AG04449 (cell line): ENCODE measurements at regions of chr19 and their contacts with region 1.

Region 1: DNA sequence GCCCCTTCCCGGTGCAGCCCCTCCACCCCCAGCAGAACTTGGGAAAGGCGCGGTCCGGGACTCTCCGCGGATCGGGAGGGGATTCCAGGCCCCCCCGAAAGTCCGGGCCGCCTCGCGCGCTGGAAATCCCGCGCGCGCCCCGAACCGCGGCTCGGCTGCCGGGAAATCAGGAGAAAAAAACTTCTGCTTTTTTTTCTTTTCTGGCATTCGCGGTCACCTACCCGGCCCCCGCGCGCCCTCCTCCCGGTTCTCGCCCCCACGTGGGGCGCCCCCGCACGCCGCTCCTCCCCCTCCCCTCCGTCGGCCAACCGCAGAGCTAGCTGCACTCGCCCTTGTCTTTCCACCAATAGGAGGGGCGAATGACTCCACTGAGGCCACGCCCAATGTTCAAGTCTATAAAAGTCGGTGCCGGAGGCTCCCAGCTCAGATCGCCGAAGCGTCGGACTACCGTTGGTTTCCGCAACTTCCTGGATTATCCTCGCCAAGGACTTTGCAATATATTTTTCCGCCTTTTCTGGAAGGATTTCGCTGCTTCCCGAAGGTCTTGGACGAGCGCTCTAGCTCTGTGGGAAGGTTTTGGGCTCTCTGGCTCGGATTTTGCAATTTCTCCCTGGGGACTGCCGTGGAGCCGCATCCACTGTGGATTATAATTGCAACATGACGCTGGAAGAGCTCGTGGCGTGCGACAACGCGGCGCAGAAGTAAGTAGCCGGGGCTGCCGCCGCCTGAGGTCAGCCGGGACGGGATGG is at the start of gene GADD45B:
- DNase-seq: peak; percentile 82
- H3K4me3 ChIP-seq: peak within 1 kb of the TSS; percentile 100
- CTCF ChIP-seq: no peak

Region 2: DNA sequence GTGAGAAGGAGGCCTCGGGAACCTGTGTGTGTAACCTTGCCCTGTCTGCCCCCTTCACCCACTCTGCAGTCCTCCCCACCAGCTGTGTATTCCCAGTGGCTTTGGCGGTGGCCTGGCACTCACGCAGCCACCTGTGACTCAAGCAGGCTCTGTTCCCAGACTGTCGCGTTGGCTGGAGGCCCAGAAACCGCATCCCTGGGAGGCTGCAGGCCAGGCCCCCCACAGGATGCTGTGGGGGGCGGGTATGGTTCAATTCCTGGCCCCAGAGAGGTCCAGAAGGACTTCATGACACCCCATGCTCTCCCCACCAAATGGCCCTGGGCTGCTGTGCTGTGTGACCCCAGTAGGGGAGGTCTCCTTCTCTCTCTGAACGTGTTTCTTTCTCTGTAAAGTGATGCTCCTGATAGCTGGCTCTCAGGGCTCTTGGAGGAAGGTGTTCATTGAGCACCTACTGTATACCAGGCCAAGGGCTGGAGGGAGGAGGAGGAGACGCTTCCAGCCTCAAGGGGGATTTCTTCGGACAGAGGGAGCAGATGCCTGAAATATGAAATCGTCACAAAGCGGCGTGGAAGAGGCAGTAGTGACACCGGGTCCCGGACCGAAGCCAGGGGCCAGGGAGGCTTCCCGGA is 166.0 kb before region 1 on chr19:
- CTCF ChIA-PET with region 1: no interaction called
- POLR2A ChIA-PET with region 1: no interaction called
- DNase-seq: no peak
- H3K4me3 ChIP-seq: no peak overlapping the region
- CTCF ChIP-seq: no peak

Region 3: GRCh38 chr19:2461751-2462634 is 13.9 kb before region 1 on chr19:
- CTCF ChIA-PET with region 1: interaction called, 15 read pairs
- POLR2A ChIA-PET with region 1: interaction called, 37 read pairs
- DNase-seq: no peak
- H3K4me3 ChIP-seq: peak overlapping the region; percentile 73
- CTCF ChIP-seq: peak; percentile 36

Region 4: GRCh38 chr19:2503521-2504109 is 27.7 kb after region 1 on chr19:
- CTCF ChIA-PET with region 1: no interaction called
- POLR2A ChIA-PET with region 1: interaction called, 26 read pairs
- DNase-seq: no peak
- H3K4me3 ChIP-seq: no peak overlapping the region
- CTCF ChIP-seq: no peak

Region 5: DNA sequence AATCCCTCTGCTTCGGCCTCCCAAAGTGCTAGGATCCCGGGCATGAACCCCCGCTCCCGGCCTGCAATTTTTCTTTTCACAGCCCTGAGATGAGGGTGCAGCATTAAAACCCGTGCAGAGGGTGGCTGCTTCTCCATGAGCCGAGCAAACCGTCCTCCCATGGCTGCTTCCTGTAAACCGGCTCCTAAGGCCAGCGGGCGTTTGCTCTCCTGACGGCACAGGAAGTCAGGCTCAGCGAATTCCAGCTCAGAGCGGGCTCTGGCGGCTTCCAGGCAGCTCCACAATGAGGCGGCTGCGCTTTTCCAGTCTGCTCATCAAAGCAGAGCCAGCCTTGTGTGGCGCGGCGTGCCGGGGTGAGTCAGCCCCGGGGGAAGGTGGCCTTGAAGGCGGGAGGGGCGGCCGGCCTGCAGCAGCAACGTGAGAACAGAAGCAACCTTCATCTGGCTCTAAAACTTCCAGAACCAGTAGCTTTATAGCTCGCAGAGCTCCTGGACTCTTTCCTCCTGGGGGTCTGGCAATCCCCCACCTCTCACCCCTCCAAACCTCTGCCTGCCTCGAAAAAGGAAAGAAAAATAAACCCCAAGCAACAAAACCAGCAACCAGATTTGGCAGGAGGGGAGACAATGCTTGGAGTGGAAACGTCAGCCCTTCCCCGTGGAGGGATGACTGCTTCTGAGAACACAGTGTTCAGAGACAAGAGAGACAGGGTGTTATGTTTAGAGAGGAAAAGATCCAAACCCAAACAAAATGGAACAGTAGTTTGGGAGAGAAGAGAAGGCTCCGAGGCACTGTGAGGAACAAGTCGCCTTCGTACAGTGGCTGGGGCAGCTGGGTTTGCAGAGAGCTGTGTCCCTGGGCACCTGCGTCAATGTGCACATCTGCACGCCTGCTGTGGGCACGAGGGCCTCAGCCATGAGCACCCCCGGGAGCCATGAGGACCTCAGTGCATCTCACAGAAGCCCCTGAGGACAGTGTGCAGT is 67.9 kb after region 1 on chr19:
- CTCF ChIA-PET with region 1: interaction called, 8 read pairs
- POLR2A ChIA-PET with region 1: interaction called, 194 read pairs
- DNase-seq: peak; percentile 93
- H3K4me3 ChIP-seq: peak overlapping the region; percentile 30
- CTCF ChIP-seq: peak; percentile 57

Region 6: DNA sequence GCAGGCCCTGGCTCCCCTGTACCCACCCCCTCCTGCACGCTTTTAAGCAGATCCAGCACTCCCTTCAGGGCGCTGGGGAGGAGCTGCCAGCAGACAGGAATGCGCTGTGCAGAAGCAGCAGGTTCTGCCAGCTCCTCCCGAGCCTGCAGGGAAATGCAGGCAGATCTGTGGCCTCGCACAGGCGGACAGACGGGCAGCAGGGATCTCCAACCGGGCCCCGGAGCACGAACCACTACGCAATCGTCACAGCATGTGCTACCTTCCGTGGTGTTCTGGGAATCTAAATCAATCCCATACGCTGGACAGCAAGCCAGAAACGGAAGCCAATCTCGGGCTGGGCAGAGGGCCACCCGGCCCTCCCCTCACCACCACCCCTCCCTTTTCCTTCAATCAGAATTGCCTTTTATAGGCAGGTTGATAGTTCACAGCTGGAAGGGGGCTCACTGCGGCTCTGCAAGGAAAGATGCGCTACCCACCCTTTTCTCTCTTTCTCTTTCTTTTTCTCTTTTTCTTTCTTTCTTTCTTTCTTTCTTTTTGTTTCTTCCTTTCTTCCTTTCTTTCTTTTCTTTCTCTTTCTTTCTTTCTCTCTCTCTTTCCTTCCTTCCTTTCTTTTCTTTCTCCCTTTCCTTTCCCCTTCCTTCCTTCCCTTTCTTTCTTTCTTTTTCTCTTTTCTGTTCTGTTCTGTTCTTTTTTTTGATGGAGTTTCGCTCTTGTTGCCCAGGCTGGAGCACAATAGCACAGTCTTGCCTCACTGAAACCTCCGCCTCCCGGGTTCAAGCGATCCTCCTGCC is 126.7 kb after region 1 on chr19:
- CTCF ChIA-PET with region 1: interaction called, 14 read pairs
- POLR2A ChIA-PET with region 1: interaction called, 191 read pairs
- DNase-seq: peak; percentile 93
- H3K4me3 ChIP-seq: peak overlapping the region; percentile 24
- CTCF ChIP-seq: peak; percentile 26

Region 7: GRCh38 chr19:2627319-2627829 is 151.5 kb after region 1 on chr19:
- CTCF ChIA-PET with region 1: interaction called, 5 read pairs
- POLR2A ChIA-PET with region 1: interaction called, 25 read pairs
- DNase-seq: peak; percentile 88
- H3K4me3 ChIP-seq: no peak overlapping the region
- CTCF ChIP-seq: no peak